HepG2 (cell line): ENCODE measurements at regions of chr5 and their contacts with region 1.

Region 1: GRCh38 chr5:53478411-53479044 is 1.9 kb upstream of the FST start:
- DNase-seq: peak; percentile 79
- ATAC-seq: peak; percentile 4
- H3K4me3 ChIP-seq: peak overlapping the region; percentile 65 to 95 (median 84)
- H3K27ac ChIP-seq: peak overlapping the region; percentile 98
- H3K4me1 ChIP-seq: peaks cover 55% of the 10 kb centered on the region
- H3K27me3 ChIP-seq: peaks cover 0 to 5% of the 10 kb centered on the region in 2 experiments; a peak in 1 of 5 replicates
- CTCF ChIP-seq: peak; percentile 74
- EP300 ChIP-seq: peak in 1 of 2 experiments; percentile 48; a peak in 1 of 4 replicates
- POLR2A ChIP-seq: peak; percentile 48 to 64
- RAD21 ChIP-seq: peak; percentile 35; the same call in 1 of the 2 replicates

Region 2: GRCh38 chr5:53463909-53464621 is 14.5 kb before region 1 on chr5:
- CTCF ChIA-PET with region 1: no interaction called
- POLR2A ChIA-PET with region 1: interaction called, 45 read pairs
- in situ Hi-C with region 1: no loop called
- intact Hi-C with region 1: loop called (anchors 2 kb)
- DNase-seq: no peak
- ATAC-seq: peak; percentile 45
- H3K4me3 ChIP-seq: peak overlapping the region in 1 of 3 experiments; percentile 18; a peak in 1 of 6 replicates
- H3K27ac ChIP-seq: peak overlapping the region; percentile 50
- H3K4me1 ChIP-seq: peaks cover 43% of the 10 kb centered on the region
- H3K27me3 ChIP-seq: no peaks in the 10 kb centered on the region
- CTCF ChIP-seq: no peak
- EP300 ChIP-seq: no peak
- POLR2A ChIP-seq: no peak
- RAD21 ChIP-seq: no peak

Region 3: DNA sequence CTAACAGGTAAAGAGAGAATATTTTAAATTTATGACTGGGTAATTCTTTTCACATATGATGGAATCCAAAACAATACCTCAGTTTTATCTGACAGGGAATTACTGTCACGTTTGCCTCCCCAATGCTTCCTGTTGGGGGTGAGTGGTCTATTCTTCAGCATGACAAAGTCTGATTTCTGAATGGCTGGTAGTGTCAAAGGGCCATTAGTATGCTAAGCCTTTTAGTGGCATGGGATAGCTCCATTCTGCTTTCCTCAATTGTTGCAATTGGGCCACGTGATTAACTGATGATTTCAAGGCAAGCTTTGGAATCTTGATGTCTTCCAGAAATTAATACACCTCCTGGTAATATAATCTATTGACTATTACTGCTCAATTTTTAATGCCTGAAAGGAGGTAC is 67.2 kb after region 1 on chr5:
- CTCF ChIA-PET with region 1: no interaction called
- POLR2A ChIA-PET with region 1: no interaction called
- in situ Hi-C with region 1: no loop called
- intact Hi-C with region 1: no loop called
- DNase-seq: no peak
- ATAC-seq: no peak
- H3K4me3 ChIP-seq: no peak overlapping the region
- H3K27ac ChIP-seq: no peak overlapping the region
- H3K4me1 ChIP-seq: peaks cover 5% of the 10 kb centered on the region; the same call in 1 of the 2 replicates
- H3K27me3 ChIP-seq: no peaks in the 10 kb centered on the region
- CTCF ChIP-seq: no peak
- EP300 ChIP-seq: no peak
- POLR2A ChIP-seq: no peak
- RAD21 ChIP-seq: no peak

Region 4: DNA sequence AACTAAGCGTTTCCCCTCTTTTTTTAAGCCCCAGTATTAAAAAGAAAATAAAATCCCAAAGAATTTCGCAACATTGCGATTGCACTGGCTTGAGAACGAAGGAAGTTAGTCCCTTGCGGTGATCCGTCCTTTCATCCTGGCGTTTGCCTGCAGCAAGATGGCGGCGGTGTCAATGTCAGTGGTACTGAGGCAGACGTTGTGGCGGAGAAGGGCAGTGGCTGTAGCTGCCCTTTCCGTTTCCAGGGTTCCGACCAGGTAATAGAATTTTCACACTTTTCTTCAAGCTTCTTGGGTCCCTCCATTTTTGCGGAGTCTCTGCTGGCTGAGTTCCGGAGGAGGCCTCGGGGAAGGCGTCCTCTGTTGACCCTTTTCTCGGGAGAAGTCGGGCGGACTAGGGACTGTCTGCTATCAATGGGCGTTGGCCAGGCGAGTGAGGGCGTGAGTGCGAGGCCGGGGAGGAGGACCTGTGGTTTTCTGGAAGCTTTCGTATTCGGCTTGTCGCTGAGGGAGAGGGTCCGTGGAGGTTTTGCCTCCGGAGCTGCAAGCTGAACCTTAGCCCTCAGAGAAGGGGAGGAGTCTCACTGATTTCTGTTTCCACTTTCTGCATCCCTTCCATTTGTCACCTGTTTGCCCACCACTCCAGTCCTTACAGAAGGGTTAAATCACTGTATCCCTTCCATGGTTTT is 82.1 kb after region 1 on chr5 and contains the start of gene NDUFS4:
- CTCF ChIA-PET with region 1: no interaction called
- POLR2A ChIA-PET with region 1: interaction called, 5 read pairs
- in situ Hi-C with region 1: no loop called
- intact Hi-C with region 1: loop called (anchors 5 kb)
- DNase-seq: peak; percentile 69
- ATAC-seq: peak; percentile 96
- H3K4me3 ChIP-seq: peak within 1 kb of the TSS; percentile 79 to 87 (median 81)
- H3K27ac ChIP-seq: peak within 1 kb of the TSS; percentile 82
- H3K4me1 ChIP-seq: peaks cover 33% of the 10 kb centered on the region
- H3K27me3 ChIP-seq: no peaks in the 10 kb centered on the region; a peak in 1 of 5 replicates
- CTCF ChIP-seq: no peak
- EP300 ChIP-seq: 0 out of 4 replicates have a peak, but pooled peaks of 1 of the 2 experiments have one; percentile 30
- POLR2A ChIP-seq: peak; percentile 76 to 85
- RAD21 ChIP-seq: no peak
- total RNA-seq, gene NDUFS4: 121 and 146 TPM in 2 replicates

Region 5: DNA sequence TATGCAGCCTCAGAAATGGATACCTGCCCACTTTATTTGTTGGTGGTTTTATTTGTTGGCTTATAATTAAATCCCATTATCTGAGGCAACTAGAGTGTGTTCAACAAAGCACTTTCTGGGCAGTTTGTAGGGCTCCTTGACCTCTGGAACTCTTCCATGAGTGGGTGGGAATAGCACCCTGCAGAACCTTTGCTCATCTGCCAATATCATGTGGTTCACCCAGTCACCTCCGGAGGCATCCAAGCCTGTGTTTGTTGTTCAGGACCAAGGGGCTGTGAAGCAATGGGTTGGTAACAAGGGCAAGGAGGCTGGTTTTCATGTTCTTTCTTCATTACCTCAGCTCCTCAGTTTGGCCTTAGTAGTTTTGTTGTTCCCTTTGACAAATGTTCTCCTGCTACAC is 395.9 kb after region 1 on chr5:
- CTCF ChIA-PET with region 1: no interaction called
- POLR2A ChIA-PET with region 1: no interaction called
- in situ Hi-C with region 1: no loop called
- intact Hi-C with region 1: loop called (anchors 5 kb)
- DNase-seq: no peak
- ATAC-seq: peak; percentile 91
- H3K4me3 ChIP-seq: no peak overlapping the region
- H3K27ac ChIP-seq: no peak overlapping the region
- H3K4me1 ChIP-seq: peaks cover 12% of the 10 kb centered on the region
- H3K27me3 ChIP-seq: no peaks in the 10 kb centered on the region
- CTCF ChIP-seq: no peak
- EP300 ChIP-seq: no peak
- POLR2A ChIP-seq: no peak
- RAD21 ChIP-seq: no peak

Region 6: GRCh38 chr5:54062958-54063357 is 584.4 kb after region 1 on chr5:
- CTCF ChIA-PET with region 1: no interaction called
- POLR2A ChIA-PET with region 1: no interaction called
- in situ Hi-C with region 1: no loop called
- intact Hi-C with region 1: loop called (anchors 5 kb)
- DNase-seq: no peak
- ATAC-seq: no peak
- H3K4me3 ChIP-seq: no peak overlapping the region
- H3K27ac ChIP-seq: no peak overlapping the region
- H3K4me1 ChIP-seq: no peaks in the 10 kb centered on the region
- H3K27me3 ChIP-seq: no peaks in the 10 kb centered on the region
- CTCF ChIP-seq: no peak
- EP300 ChIP-seq: no peak
- POLR2A ChIP-seq: no peak
- RAD21 ChIP-seq: no peak